Naive thymus-derived CD4-positive, alpha-beta T cell (primary cell): ENCODE measurements at regions of chrX and their contacts with region 1.

Region 1: GRCh38 chrX:133698298-133698697 is 283.0 kb upstream of the GPC4 start:
- DNase-seq: peak in 4 of 9 donors; percentile 1 to 29 (median 19)
- ATAC-seq: no peak
- H3K4me3 ChIP-seq: no peak overlapping the region
- H3K4me3 Mint-ChIP-seq: no peak overlapping the region
- H3K27ac ChIP-seq: no peak overlapping the region
- H3K27ac Mint-ChIP-seq: peak overlapping the region in 2 of 9 donors; percentile 36 to 40
- H3K4me1 ChIP-seq: no peaks in the 10 kb centered on the region
- H3K4me1 Mint-ChIP-seq: no peaks in the 10 kb centered on the region
- H3K27me3 ChIP-seq: no peaks in the 10 kb centered on the region
- H3K27me3 Mint-ChIP-seq: no peaks in the 10 kb centered on the region

Region 2: GRCh38 chrX:133638285-133638684 is 60.0 kb before region 1 on chrX:
- CTCF ChIA-PET with region 1: no interaction called
- POLR2A ChIA-PET with region 1: no interaction called
- intact Hi-C with region 1: no loop called
- DNase-seq: no peak
- ATAC-seq: no peak
- H3K4me3 ChIP-seq: no peak overlapping the region
- H3K4me3 Mint-ChIP-seq: no peak overlapping the region
- H3K27ac ChIP-seq: no peak overlapping the region
- H3K27ac Mint-ChIP-seq: no peak overlapping the region
- H3K4me1 ChIP-seq: no peaks in the 10 kb centered on the region
- H3K4me1 Mint-ChIP-seq: no peaks in the 10 kb centered on the region
- H3K27me3 ChIP-seq: no peaks in the 10 kb centered on the region
- H3K27me3 Mint-ChIP-seq: no peaks in the 10 kb centered on the region

Region 3: DNA sequence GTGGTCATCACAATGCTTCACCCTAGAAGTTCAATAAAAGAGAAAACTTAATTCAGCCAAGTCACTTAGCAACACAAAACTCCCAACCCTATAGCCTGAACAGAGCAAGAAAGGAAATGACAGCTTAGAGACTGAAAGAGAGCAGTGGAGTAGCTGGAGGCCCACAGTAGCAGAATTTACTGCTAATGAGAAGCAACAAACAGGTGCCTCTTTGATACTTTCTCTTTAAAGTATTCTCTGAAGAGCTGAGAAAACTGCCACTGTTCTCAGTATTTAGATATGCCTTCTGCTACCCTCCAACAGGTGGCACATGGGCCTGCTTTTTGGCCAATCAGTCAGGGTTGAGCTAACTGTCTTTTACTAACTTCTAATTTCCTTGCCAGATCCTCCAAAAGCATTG is 47.1 kb after region 1 on chrX:
- CTCF ChIA-PET with region 1: no interaction called
- POLR2A ChIA-PET with region 1: interaction called, 3 read pairs
- intact Hi-C with region 1: loop called in 1 of 2 experiments (anchors 2 kb)
- DNase-seq: peak in 7 of 9 donors; percentile 30 to 77 (median 59)
- ATAC-seq: peak; percentile 87
- H3K4me3 ChIP-seq: no peak overlapping the region
- H3K4me3 Mint-ChIP-seq: peak overlapping the region in 7 of 10 donors; percentile 7 to 57 (median 36)
- H3K27ac ChIP-seq: peak overlapping the region; percentile 14
- H3K27ac Mint-ChIP-seq: peak overlapping the region in 8 of 9 donors; percentile 71 to 94 (median 80)
- H3K4me1 ChIP-seq: peaks cover 0 to 49% of the 10 kb centered on the region in 2 donors
- H3K4me1 Mint-ChIP-seq: peaks cover 11 to 75% (median 65%) of the 10 kb centered on the region in 7 donors
- H3K27me3 ChIP-seq: no peaks in the 10 kb centered on the region
- H3K27me3 Mint-ChIP-seq: no peaks in the 10 kb centered on the region